IMR-90 (cell line): ENCODE measurements at regions of chr17 and their contacts with region 1.

Region 1: DNA sequence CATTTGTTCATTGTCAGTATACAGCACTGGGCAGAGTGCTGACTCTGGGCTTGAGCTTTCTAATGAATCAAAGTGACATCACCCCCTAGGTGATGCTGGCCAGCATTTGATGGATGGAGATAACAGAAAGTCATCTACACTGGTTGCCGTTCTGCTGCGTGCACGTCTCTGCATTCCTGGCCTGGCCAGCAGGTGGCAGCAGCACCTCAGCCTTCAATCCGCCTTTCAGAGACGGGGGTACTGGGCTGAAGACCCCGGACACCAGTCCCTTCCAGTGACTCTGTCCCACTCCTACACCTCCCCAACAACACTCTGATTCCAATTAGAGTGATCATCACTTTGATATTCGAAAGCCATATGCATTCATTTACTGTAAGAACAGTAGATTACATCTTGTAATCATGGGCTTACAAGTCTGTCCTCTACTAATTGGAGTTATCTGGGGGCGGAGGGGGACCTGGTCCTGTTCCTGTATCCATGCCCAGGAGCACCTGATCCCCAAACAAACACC is 6.0 kb downstream of the CPSF4L start:
- DNase-seq: peak; percentile 24
- ATAC-seq: peak; percentile 87
- H3K4me3 ChIP-seq: no peak overlapping the region
- H3K27ac ChIP-seq: no peak overlapping the region
- H3K4me1 ChIP-seq: no peaks in the 10 kb centered on the region
- H3K27me3 ChIP-seq: no peaks in the 10 kb centered on the region
- CTCF ChIP-seq: peak; percentile 95
- POLR2A ChIP-seq: 0 out of 2 replicates have a peak, but pooled peaks have one; percentile 38
- RAD21 ChIP-seq: peak; percentile 99

Region 2: DNA sequence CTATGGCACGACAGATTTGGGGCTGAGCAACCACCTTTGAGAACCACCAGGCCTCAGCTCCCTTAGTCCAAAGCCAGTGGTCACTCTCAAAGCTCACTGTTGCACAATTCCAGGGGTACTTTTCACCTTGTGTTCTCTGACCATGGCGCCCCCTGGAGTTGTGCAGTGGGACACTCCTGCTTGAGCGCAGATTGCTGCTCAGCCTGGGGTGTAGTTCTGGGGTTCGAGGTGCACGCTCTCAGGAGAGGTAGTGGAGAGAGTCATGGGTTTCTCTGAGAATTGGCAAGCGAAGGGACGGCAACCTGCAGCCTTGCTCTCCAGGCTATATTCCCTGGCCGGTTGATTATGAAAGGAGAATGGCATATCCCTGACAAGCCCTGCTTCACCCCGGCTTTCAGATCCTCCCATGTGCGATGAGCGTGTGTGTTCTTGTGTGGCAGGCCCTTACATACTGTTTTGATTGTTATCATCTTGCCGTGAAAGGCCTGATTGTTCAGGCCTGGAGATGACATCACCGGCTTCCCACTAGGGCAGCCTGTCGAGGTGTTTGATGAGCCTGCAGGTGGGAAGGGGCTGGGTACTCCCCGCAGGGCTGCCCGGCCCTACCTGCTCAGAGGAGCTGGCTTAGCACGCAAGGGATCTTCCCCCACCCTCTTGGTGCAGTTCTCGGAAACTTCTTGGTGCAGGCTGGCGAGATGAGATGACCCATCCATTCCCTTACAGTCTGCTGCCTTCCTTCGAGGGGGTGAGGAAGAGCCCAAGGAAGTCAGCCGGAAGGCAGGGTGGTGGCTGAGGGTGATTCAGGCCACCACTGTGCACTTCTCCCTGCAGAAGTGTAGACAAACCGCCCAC is 594.4 kb before region 1 on chr17:
- CTCF ChIA-PET with region 1: no interaction called
- POLR2A ChIA-PET with region 1: no interaction called
- dilution Hi-C with region 1: no loop called
- in situ Hi-C with region 1: no loop called
- intact Hi-C with region 1: no loop called
- DNase-seq: no peak
- ATAC-seq: no peak
- H3K4me3 ChIP-seq: no peak overlapping the region
- H3K27ac ChIP-seq: no peak overlapping the region
- H3K4me1 ChIP-seq: peaks cover 2% of the 10 kb centered on the region; the same call in 1 of the 2 replicates
- H3K27me3 ChIP-seq: no peaks in the 10 kb centered on the region
- CTCF ChIP-seq: no peak
- POLR2A ChIP-seq: no peak
- RAD21 ChIP-seq: no peak

Region 3: GRCh38 chr17:73234736-73235135 is 21.0 kb before region 1 on chr17:
- CTCF ChIA-PET with region 1: no interaction called
- POLR2A ChIA-PET with region 1: no interaction called
- dilution Hi-C with region 1: no loop called
- in situ Hi-C with region 1: no loop called
- intact Hi-C with region 1: no loop called
- DNase-seq: no peak
- ATAC-seq: no peak
- H3K4me3 ChIP-seq: no peak overlapping the region
- H3K27ac ChIP-seq: no peak overlapping the region
- H3K4me1 ChIP-seq: peaks cover 8% of the 10 kb centered on the region
- H3K27me3 ChIP-seq: no peaks in the 10 kb centered on the region
- CTCF ChIP-seq: no peak
- POLR2A ChIP-seq: no peak
- RAD21 ChIP-seq: no peak

Region 4: GRCh38 chr17:73546770-73547536 is 291.2 kb after region 1 on chr17:
- CTCF ChIA-PET with region 1: no interaction called
- POLR2A ChIA-PET with region 1: no interaction called
- dilution Hi-C with region 1: no loop called
- in situ Hi-C with region 1: loop called (anchors 25 kb)
- intact Hi-C with region 1: no loop called
- DNase-seq: no peak
- ATAC-seq: no peak
- H3K4me3 ChIP-seq: no peak overlapping the region
- H3K27ac ChIP-seq: no peak overlapping the region
- H3K4me1 ChIP-seq: no peaks in the 10 kb centered on the region
- H3K27me3 ChIP-seq: no peaks in the 10 kb centered on the region
- CTCF ChIP-seq: no peak
- POLR2A ChIP-seq: no peak
- RAD21 ChIP-seq: no peak

Region 5: DNA sequence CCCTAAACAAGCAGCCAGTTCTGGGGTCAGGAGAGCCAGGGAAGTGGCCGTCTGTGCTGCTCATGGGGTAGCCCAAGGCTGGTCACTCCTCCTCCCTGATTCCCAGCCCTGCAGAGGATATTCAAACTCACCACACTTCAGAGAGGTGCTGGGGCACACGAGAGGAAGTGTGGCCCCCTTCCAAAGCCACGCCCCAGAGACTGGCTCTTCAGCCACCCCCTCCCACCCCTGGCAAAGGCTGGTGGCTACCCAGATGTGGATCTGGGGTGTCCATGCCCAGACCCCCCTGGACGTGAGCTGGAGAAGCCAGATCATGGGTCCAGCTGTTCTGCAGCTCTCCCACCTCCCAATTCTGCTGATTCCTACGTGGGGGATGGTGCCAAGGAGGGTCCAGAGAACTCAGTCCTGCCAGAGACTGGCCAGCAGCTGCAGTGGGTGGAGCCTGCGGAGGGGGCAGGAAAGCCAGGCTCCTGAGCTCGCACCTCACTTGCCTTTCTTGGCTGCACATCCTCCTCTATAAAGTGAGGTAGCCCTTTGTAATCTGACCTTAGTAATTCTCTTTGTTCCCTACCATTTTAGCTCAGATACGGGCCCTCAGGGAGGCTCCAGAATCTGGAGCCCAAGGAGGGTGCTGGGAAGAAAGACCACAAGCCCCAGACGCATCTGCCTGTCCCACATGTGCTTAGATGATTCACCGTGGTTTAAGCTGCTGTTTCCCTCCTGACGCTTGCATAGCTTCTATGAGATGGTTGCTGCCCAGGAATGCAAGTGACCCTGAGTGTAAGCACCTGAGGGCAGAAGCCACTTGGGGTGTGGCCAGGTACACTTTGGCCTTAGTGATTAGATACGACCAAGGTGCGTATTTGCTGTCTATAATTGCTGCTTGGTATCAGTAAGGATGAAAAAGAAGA is 373.2 kb after region 1 on chr17:
- CTCF ChIA-PET with region 1: no interaction called
- POLR2A ChIA-PET with region 1: no interaction called
- dilution Hi-C with region 1: no loop called
- in situ Hi-C with region 1: no loop called
- intact Hi-C with region 1: no loop called
- DNase-seq: no peak
- ATAC-seq: no peak
- H3K4me3 ChIP-seq: no peak overlapping the region
- H3K27ac ChIP-seq: no peak overlapping the region
- H3K4me1 ChIP-seq: no peaks in the 10 kb centered on the region
- H3K27me3 ChIP-seq: no peaks in the 10 kb centered on the region
- CTCF ChIP-seq: no peak
- POLR2A ChIP-seq: no peak
- RAD21 ChIP-seq: no peak

Region 6: GRCh38 chr17:74176546-74177001 is 920.8 kb after region 1 on chr17:
- CTCF ChIA-PET with region 1: no interaction called
- POLR2A ChIA-PET with region 1: no interaction called
- dilution Hi-C with region 1: no loop called
- in situ Hi-C with region 1: loop called (anchors 25 kb)
- intact Hi-C with region 1: loop called (anchors 5 kb)
- DNase-seq: peak; percentile 48
- ATAC-seq: peak; percentile 97
- H3K4me3 ChIP-seq: no peak overlapping the region
- H3K27ac ChIP-seq: no peak overlapping the region
- H3K4me1 ChIP-seq: no peaks in the 10 kb centered on the region
- H3K27me3 ChIP-seq: no peaks in the 10 kb centered on the region; the same call in 1 of the 2 replicates
- CTCF ChIP-seq: peak; percentile 84
- POLR2A ChIP-seq: no peak
- RAD21 ChIP-seq: peak; percentile 84